Activated CD4-positive, alpha-beta memory T cell treated with anti-CD3 and anti-CD28 coated beads, Interleukin-2, amount 10 ng/mL, durations not matched to agents 7 days and 5 days (primary cell): ENCODE measurements at regions of chr20 and their contacts with region 1.

Region 1: GRCh38 chr20:4666001-4666479 is 55.7 kb upstream of the PRND start:
- DNase-seq: peak; percentile 81
- H3K4me3 Mint-ChIP-seq: peak overlapping the region; percentile 57
- H3K27ac Mint-ChIP-seq: peak overlapping the region; percentile 95
- H3K4me1 Mint-ChIP-seq: peaks cover 69% of the 10 kb centered on the region
- H3K27me3 Mint-ChIP-seq: no peaks in the 10 kb centered on the region

Region 2: DNA sequence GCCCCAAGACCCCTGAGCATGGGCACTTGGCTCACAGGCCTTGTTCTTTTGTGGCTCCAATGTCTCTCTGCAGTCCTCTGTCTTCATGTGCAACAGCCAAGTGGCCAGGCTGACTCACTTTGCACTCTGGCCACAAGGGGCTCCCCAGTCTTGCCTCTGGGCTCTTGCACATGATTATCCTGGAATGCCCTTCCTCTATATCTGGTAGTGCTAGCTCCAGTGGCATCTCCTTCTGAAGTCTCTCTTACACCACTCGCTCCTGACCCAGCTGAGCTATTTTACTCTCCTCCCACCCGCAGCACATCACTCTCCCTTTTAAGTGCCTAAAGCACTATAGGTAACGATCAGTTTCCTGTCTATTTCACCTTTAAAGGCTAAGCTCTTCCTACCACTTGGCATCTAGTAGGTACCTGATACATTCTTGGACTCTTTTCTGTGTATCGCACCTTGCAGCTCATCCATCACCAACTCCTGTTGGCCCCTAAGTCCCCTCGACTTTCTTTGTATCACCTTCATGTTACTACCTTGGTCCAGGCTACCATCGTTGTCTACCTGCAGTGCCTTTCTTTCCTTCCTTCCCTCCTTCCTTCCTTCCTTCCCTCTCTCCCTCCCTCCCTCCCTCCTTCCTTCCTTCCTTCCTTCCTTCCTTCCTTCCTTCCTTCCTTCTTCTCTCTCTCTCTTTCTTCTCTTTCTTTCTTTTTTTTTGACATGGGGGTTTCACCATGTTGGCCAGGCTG is 438.8 kb before region 1 on chr20:
- CTCF ChIA-PET with region 1: no interaction called
- POLR2A ChIA-PET with region 1: no interaction called
- DNase-seq: no peak
- H3K4me3 Mint-ChIP-seq: no peak overlapping the region
- H3K27ac Mint-ChIP-seq: no peak overlapping the region
- H3K4me1 Mint-ChIP-seq: peaks cover 3% of the 10 kb centered on the region
- H3K27me3 Mint-ChIP-seq: peaks cover 25% of the 10 kb centered on the region

Region 3: GRCh38 chr20:4697189-4697833 is 31.3 kb after region 1 on chr20:
- CTCF ChIA-PET with region 1: no interaction called
- POLR2A ChIA-PET with region 1: interaction called, 17 read pairs
- DNase-seq: no peak
- H3K4me3 Mint-ChIP-seq: no peak overlapping the region
- H3K27ac Mint-ChIP-seq: peak overlapping the region; percentile 1
- H3K4me1 Mint-ChIP-seq: peaks cover 34% of the 10 kb centered on the region
- H3K27me3 Mint-ChIP-seq: no peaks in the 10 kb centered on the region